Dendritic cell treated with granulocyte-macrophage colony-stimulating factor and Interleukin-4, amounts not matched to agents 40 ng/mL and 50 ng/mL, for 4 days (primary cell): ENCODE measurements at regions of chr9 and their contacts with region 1.

Region 1: DNA sequence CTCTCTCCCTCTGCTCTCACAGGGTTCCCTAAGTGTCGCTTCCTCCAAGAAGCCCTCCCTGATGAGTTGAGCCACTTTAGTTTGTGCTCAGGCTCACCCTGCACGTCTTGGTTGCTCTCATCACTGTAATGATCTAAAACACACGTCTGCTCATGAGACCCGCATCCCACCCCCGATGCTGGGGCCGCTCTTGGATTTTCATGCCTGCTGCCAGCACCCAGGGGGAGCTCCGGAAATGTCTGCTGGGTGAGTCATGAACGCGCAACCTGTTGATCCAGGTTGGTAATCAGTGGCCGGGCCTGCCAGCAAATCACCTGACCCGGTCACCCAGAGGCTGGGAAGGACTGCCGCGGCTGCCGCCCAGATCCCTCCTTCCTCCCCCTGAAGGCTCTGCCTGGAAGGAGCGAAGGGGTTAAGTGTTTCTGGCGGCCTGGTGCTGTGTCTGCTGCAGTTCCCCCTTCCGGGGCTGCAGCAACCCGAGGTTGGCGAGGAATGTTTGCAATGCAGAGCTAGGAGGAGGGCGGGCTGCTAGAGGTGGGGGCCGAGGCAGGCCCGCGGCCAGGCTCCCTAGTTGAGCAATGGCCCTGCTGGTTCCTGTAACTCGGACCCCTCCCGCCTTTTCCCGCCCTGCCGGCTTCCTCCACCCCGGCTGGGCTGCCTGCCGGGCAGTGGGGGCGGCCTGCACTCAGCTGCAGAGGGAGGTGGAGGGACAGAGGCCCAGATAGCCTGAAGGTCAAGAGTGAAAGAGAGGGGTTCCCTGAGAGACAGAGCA is 156.1 kb upstream of the IER5L start:
- H3K4me3 Mint-ChIP-seq: peak overlapping the region; percentile 73
- H3K27ac Mint-ChIP-seq: peak overlapping the region; percentile 83
- H3K4me1 Mint-ChIP-seq: peaks cover 54% of the 10 kb centered on the region
- H3K27me3 Mint-ChIP-seq: no peaks in the 10 kb centered on the region

Region 2: DNA sequence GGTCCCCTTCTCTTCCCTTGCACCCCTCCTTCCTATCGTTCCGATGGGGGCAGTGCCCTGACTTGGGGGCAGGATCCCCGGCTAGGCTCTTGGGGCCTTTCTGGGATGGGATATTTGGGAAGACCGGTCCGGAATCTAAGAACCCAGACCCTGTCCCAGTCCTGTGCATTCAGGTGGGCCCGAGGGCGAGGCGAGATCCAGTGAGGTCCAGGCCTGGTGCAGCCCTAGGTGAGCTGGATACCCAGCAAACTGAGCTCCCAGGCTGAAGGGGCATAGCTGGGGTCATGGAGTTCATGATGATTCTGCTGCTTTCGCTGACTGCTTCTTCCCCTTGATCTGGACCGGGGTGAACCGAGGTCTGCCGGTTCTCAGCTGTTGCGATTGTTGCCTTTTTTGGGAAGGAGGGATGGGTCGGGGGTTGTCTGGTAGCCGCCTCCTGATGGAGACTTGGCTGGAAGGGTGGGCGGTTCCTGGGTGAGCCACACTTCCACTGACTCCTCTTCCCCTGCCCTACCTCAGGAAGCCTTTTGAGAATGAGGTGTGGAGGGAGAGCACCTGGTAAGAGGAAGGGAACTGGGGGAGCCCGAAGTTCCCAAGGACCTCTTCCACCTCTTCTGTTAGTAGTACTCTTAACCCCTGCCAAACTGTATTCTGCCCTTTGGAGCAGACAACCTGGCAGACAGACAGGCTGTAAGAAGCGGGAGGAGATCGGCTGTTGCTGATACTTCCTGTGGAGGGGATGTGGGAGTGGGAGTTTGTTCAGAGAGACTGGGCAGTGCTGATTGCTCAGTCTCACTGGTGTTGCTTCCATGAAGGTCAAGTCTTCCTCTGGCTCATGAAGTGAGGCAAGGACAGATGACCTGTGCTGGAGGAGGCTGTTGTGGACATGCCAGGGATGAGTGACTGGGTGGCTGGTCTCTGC is 451.2 kb before region 1 on chr9:
- intact Hi-C with region 1: no loop called
- H3K4me3 Mint-ChIP-seq: peak overlapping the region; percentile 99
- H3K27ac Mint-ChIP-seq: peak overlapping the region; percentile 96
- H3K4me1 Mint-ChIP-seq: peaks cover 64% of the 10 kb centered on the region
- H3K27me3 Mint-ChIP-seq: no peaks in the 10 kb centered on the region

Region 3: GRCh38 chr9:129052592-129052991 is 281.5 kb before region 1 on chr9:
- intact Hi-C with region 1: no loop called
- H3K4me3 Mint-ChIP-seq: no peak overlapping the region
- H3K27ac Mint-ChIP-seq: no peak overlapping the region
- H3K4me1 Mint-ChIP-seq: no peaks in the 10 kb centered on the region
- H3K27me3 Mint-ChIP-seq: no peaks in the 10 kb centered on the region

Region 4: DNA sequence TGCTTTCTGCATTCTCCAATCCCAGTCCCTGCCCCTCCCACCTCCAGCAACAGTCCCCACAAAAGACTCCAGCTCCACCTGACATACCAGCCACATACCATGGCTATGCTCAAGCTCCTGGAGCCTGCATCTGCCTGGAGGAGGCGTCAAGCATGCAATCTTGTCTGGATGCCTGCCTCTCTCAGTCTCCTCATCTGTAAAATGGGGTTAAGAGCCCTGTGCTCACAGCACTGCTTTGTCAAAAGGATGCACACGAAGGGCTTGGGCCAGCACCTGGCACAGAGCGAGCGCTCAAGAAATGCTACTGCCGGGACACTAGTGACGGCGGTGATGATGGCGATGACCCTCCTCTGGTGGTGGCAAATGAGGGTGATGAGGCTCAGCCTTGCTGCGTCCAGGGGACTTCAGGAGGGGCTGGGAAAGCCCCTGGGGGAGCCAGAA is 46.8 kb after region 1 on chr9:
- intact Hi-C with region 1: no loop called
- H3K4me3 Mint-ChIP-seq: no peak overlapping the region
- H3K27ac Mint-ChIP-seq: no peak overlapping the region
- H3K4me1 Mint-ChIP-seq: peaks cover 26% of the 10 kb centered on the region
- H3K27me3 Mint-ChIP-seq: peaks cover 4% of the 10 kb centered on the region

Region 5: GRCh38 chr9:129451089-129452025 is 117.2 kb after region 1 on chr9:
- intact Hi-C with region 1: no loop called
- H3K4me3 Mint-ChIP-seq: no peak overlapping the region
- H3K27ac Mint-ChIP-seq: no peak overlapping the region
- H3K4me1 Mint-ChIP-seq: peaks cover 16% of the 10 kb centered on the region
- H3K27me3 Mint-ChIP-seq: peaks cover 18% of the 10 kb centered on the region

Region 6: GRCh38 chr9:129482521-129483414 is 148.6 kb after region 1 on chr9:
- intact Hi-C with region 1: loop called (anchors 10 kb)
- H3K4me3 Mint-ChIP-seq: peak overlapping the region; percentile 67
- H3K27ac Mint-ChIP-seq: peak overlapping the region; percentile 73
- H3K4me1 Mint-ChIP-seq: peaks cover 75% of the 10 kb centered on the region
- H3K27me3 Mint-ChIP-seq: peaks cover 2% of the 10 kb centered on the region